Keratinocyte (primary cell): ENCODE measurements at regions of chr11 and their contacts with region 1.

Region 1: GRCh38 chr11:113457784-113458183 is 17.4 kb downstream of the DRD2 start:
- DNase-seq: no peak
- H3K4me3 ChIP-seq: no peak overlapping the region
- H3K27ac ChIP-seq: no peak overlapping the region
- H3K4me1 ChIP-seq: no peaks in the 10 kb centered on the region
- H3K27me3 ChIP-seq: no peaks in the 10 kb centered on the region
- CTCF ChIP-seq: no peak

Region 2: GRCh38 chr11:113519989-113520613 is 62.3 kb after region 1 on chr11:
- dilution Hi-C with region 1: loop called (anchors 10 kb)
- DNase-seq: no peak
- H3K4me3 ChIP-seq: no peak overlapping the region
- H3K27ac ChIP-seq: no peak overlapping the region
- H3K4me1 ChIP-seq: peaks cover 14% of the 10 kb centered on the region
- H3K27me3 ChIP-seq: no peaks in the 10 kb centered on the region
- CTCF ChIP-seq: no peak